Aorta (tissue), 5 donors: ENCODE measurements at regions of chr1 and their contacts with region 1.

Region 1: GRCh38 chr1:208652296-208653160 is 408.3 kb upstream of the PLXNA2 start:
- DNase-seq: peak in 1 of 2 donors; percentile 45
- ATAC-seq: peak; percentile 79
- H3K4me3 ChIP-seq: no peak overlapping the region
- H3K27ac ChIP-seq: no peak overlapping the region
- H3K4me1 ChIP-seq: no peaks in the 10 kb centered on the region
- H3K27me3 ChIP-seq: no peaks in the 10 kb centered on the region

Region 2: GRCh38 chr1:208587110-208587509 is 65.4 kb before region 1 on chr1:
- intact Hi-C with region 1: no loop called
- DNase-seq: no peak
- ATAC-seq: no peak
- H3K4me3 ChIP-seq: no peak overlapping the region
- H3K27ac ChIP-seq: no peak overlapping the region
- H3K4me1 ChIP-seq: peaks cover 0 to 2% of the 10 kb centered on the region in 2 donors
- H3K27me3 ChIP-seq: no peaks in the 10 kb centered on the region

Region 3: DNA sequence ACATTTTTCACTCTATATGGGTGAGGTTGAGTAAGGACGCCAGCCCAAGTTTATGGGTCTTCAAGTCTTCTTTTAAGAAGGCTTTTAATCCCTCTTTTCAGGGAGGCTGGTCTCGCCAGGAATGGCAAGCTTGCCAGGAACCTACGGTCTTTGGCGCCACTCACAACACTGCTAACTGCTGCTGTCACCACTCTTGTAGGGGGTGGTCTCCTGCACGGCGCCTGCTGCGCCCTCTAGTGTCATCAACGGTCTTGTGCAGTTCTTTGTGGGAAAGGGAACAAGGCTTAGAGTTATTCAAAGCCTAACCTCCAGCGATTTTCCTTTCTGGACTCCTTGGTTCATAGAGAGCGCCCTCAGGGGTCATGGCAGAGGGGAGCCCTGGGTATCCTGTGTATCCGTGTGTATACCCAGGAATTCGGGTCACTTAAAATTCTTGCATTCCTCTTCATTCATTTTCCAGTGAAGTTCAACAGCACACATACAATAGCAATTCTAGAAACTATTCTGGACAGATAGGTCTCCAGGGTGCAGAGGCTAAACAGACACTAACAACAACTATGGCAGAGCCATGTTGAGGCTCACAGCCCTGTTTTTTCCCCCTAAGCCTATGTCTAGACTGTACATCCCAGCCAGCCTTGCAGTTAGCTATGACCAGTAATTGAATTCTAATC is 538.2 kb after region 1 on chr1:
- intact Hi-C with region 1: loop called (anchors 5 kb)
- DNase-seq: peak; percentile 62 to 83
- ATAC-seq: peak; percentile 69
- H3K4me3 ChIP-seq: no peak overlapping the region
- H3K27ac ChIP-seq: no peak overlapping the region
- H3K4me1 ChIP-seq: no peaks in the 10 kb centered on the region
- H3K27me3 ChIP-seq: no peaks in the 10 kb centered on the region

Region 4: DNA sequence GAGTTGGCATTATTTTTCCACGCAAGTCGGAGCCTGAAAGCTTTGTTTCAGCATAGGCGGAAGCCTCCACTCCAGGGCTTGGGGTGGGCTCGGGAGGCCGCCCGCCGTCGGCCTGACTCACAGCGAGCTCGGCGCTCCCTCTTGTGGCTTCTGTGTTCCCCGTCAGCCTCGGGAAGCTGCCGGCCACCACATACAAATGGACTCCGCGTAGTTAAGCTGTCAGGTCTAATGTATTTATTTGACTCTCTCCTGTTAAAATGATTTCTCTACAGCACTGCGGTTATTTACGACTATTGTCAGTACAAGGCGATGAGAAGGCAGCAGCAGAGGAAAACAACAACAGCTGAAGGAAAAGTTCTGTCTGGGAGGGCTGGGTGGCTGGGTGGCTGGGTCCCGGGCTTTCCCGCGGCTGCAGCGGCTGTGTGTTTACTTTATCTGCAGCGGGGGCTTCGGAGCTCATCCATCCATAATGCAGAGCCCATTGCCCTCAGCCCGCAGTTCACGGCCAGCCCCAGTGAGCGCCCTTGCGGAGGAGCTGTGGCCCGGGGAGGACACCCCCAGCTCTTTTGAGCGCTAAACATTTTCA is 555.3 kb after region 1 on chr1:
- intact Hi-C with region 1: loop called in 1 of 2 experiments (anchors 5 kb)
- DNase-seq: peak; percentile 75 to 91
- ATAC-seq: peak; percentile 89
- H3K4me3 ChIP-seq: no peak overlapping the region
- H3K27ac ChIP-seq: no peak overlapping the region
- H3K4me1 ChIP-seq: no peaks in the 10 kb centered on the region
- H3K27me3 ChIP-seq: no peaks in the 10 kb centered on the region